MCF 10A (cell line): ENCODE measurements at regions of chr2 and their contacts with region 1.

Region 1: DNA sequence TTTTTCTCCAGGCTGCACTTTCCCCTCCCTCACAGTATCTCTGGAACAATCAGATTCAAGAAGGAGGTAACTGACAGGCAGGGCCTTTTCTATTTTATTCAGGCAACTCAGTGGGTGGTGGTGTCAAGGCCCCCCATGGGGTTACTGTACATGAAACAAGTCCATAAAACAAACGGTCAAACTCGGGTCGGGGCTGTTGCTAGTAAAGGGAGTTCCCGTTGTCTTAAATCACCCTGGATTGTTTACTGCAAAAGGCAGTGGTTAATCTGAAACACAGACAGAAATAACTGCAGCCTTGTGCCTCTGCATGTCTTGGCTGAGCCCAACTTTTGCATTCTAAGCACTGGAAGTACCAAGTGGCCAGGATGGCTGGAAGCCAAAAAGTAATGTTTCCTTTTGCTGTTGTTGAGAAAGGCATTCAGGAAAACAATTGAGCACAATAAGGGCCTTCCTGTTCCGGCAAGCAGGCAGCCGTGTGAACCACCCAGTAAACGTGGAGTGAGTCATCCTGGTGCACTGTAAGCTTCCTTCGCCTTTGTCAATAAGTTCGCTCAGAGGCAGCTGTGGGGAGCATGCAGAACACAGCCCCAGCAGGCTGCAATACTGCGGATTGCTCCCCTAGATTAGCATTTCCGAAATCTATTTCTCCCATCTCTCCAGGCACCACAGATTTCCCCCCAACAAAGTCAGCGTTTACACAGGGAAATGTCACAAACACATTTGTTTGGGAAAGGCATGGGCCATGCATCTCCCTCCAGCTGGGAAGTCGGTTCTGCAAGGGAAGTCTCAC is 149.6 kb downstream of the IRS1 start:
- DNase-seq: peak; percentile 99
- H3K4me3 Mint-ChIP-seq: no peak overlapping the region
- H3K27ac Mint-ChIP-seq: peak overlapping the region; percentile 95
- H3K4me1 Mint-ChIP-seq: peaks cover 35% of the 10 kb centered on the region
- H3K27me3 Mint-ChIP-seq: no peaks in the 10 kb centered on the region
- CTCF ChIP-seq: no peak

Region 2: GRCh38 chr2:226661789-226662545 is 11.9 kb after region 1 on chr2:
- CTCF ChIA-PET with region 1: interaction called, 3 read pairs
- POLR2A ChIA-PET with region 1: interaction called, 13 read pairs
- intact Hi-C with region 1: no loop called
- DNase-seq: peak; percentile 94
- H3K4me3 Mint-ChIP-seq: peak overlapping the region; percentile 17
- H3K27ac Mint-ChIP-seq: peak overlapping the region; percentile 25
- H3K4me1 Mint-ChIP-seq: peaks cover 44% of the 10 kb centered on the region
- H3K27me3 Mint-ChIP-seq: no peaks in the 10 kb centered on the region
- CTCF ChIP-seq: no peak

Region 3: GRCh38 chr2:226756129-226756528 is 106.1 kb after region 1 on chr2:
- CTCF ChIA-PET with region 1: interaction called, 3 read pairs
- POLR2A ChIA-PET with region 1: interaction called, 11 read pairs
- intact Hi-C with region 1: no loop called
- DNase-seq: peak; percentile 93
- H3K4me3 Mint-ChIP-seq: no peak overlapping the region
- H3K27ac Mint-ChIP-seq: peak overlapping the region; percentile 97
- H3K4me1 Mint-ChIP-seq: peaks cover 15% of the 10 kb centered on the region
- H3K27me3 Mint-ChIP-seq: no peaks in the 10 kb centered on the region
- CTCF ChIP-seq: no peak

Region 4: GRCh38 chr2:226906163-226906693 is 256.2 kb after region 1 on chr2:
- CTCF ChIA-PET with region 1: no interaction called
- POLR2A ChIA-PET with region 1: no interaction called
- intact Hi-C with region 1: no loop called
- DNase-seq: no peak
- H3K4me3 Mint-ChIP-seq: no peak overlapping the region
- H3K27ac Mint-ChIP-seq: no peak overlapping the region
- H3K4me1 Mint-ChIP-seq: peaks cover 7% of the 10 kb centered on the region
- H3K27me3 Mint-ChIP-seq: no peaks in the 10 kb centered on the region
- CTCF ChIP-seq: no peak